ENCODE measurements at regions of chr17 and their contacts with region 1.

Region 1: GRCh38 chr17:72602517-72603419 is 481.9 kb downstream of the SOX9 start:
- DNase-seq: peak; percentile 65
- H3K4me3 ChIP-seq: no peak overlapping the region
- CTCF ChIP-seq: peak; percentile 25

Region 2: DNA sequence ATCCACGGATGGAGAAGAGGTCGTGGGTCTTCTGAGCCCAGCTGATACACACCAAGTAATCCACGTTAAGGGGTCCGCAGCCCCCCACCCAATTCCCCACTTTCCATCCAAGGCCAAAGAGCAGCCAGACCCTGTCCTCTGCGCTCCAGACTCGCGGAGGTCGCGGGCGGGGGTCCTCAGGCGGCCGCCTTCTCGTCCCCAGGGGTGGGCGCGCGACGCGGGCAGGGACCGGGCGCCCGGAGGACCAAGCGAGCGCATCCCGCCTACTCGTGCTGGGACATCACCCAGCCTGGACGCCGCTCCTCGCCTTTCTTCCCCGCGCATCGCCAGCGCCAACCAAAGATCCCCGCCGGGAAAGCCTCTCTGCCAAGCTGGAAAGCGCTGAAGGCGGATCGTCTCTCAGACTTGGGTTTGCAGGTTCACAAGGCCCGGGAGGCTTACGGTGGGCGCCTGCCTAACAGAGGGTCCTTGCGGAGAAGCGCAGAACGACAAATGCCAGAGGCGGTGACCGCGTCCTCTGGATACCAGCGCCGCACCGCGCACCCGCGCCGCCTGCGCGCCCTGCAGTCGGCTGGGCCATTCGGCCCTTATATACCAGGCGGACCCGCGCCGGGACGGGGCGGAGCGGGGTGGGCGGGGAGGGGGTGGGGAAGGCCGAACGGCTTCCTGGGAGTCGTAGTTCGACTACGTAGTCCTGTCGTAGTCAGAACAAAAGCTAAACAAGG is 10.4 kb before region 1 on chr17:
- CTCF ChIA-PET with region 1: interaction called, 6 read pairs
- POLR2A ChIA-PET with region 1: interaction called, 38 read pairs
- DNase-seq: no peak
- H3K4me3 ChIP-seq: peak overlapping the region; percentile 96
- CTCF ChIP-seq: no peak

Region 3: DNA sequence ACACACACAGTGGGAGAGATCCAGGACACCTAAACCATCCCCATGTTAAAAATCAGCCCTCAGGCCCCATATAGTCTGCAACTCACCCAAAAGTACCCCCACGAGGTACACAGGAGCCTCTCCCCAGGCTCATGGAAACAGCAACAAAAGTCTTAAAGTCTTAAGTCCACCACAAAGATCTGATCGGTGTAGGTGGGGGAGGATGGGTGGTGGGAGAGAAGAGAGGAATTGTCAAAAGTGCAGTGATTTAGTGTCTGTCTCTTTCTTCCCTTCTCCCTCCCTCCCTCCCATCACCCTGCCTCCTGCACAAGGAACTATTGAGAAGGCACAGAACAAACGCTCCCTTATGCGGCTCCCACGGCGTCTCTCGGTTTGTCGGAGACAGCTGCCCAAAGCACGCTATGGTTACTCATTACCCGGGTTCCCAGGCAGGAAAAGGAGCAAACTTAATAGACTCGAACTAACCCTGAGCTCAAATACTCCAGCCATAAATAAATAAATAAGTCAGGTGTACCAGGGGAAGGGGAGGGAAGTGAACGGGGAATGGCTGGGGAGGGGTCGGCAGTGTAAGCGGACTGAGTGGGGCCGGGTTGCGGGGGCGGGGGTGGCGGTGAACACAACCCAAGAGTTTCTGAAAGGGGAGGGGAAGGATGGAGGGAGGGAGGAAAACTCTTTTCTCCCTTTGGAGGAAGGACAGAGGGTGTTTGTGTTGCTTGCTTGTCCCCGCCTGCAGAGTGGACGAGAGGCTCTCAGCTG is 12.3 kb after region 1 on chr17:
- CTCF ChIA-PET with region 1: interaction called, 17 read pairs
- POLR2A ChIA-PET with region 1: interaction called, 4 read pairs
- DNase-seq: no peak
- H3K4me3 ChIP-seq: no peak overlapping the region
- CTCF ChIP-seq: no peak